ENCODE measurements at regions of chr7 and their contacts with region 1.

Region 1: GRCh38 chr7:151095123-151095797 is 9.0 kb downstream of the AGAP3 start:
- DNase-seq: no peak
- H3K4me3 ChIP-seq: no peak overlapping the region
- H3K4me3 Mint-ChIP-seq: no peak overlapping the region
- H3K27ac Mint-ChIP-seq: no peak overlapping the region
- H3K4me1 ChIP-seq: 0 out of 2 replicates have a peak, but pooled peaks cover 3% of the 10 kb centered on the region
- H3K4me1 Mint-ChIP-seq: peaks cover 7% of the 10 kb centered on the region
- H3K27me3 ChIP-seq: no peaks in the 10 kb centered on the region
- H3K27me3 Mint-ChIP-seq: no peaks in the 10 kb centered on the region
- CTCF ChIP-seq: no peak

Region 2: GRCh38 chr7:151017953-151018420 is 77.3 kb before region 1 on chr7:
- CTCF ChIA-PET with region 1: no interaction called
- POLR2A ChIA-PET with region 1: no interaction called
- intact Hi-C with region 1: no loop called
- DNase-seq: peak; percentile 74 to 89
- H3K4me3 ChIP-seq: peak overlapping the region; percentile 33
- H3K4me3 Mint-ChIP-seq: peak overlapping the region; percentile 77
- H3K27ac Mint-ChIP-seq: peak overlapping the region; percentile 80
- H3K4me1 ChIP-seq: peaks cover 26% of the 10 kb centered on the region
- H3K4me1 Mint-ChIP-seq: peaks cover 12% of the 10 kb centered on the region
- H3K27me3 ChIP-seq: no peaks in the 10 kb centered on the region
- H3K27me3 Mint-ChIP-seq: peaks cover 6% of the 10 kb centered on the region
- CTCF ChIP-seq: peak; percentile 91 to 98

Region 3: GRCh38 chr7:151057989-151058780 is 37.1 kb before region 1 on chr7:
- CTCF ChIA-PET with region 1: no interaction called
- POLR2A ChIA-PET with region 1: interaction called, 14 read pairs
- intact Hi-C with region 1: no loop called
- DNase-seq: peak; percentile 98 to 99
- H3K4me3 ChIP-seq: peak overlapping the region; percentile 59
- H3K4me3 Mint-ChIP-seq: peak overlapping the region; percentile 95
- H3K27ac Mint-ChIP-seq: peak overlapping the region; percentile 94
- H3K4me1 ChIP-seq: peaks cover 23% of the 10 kb centered on the region
- H3K4me1 Mint-ChIP-seq: peaks cover 25% of the 10 kb centered on the region
- H3K27me3 ChIP-seq: no peaks in the 10 kb centered on the region
- H3K27me3 Mint-ChIP-seq: no peaks in the 10 kb centered on the region
- CTCF ChIP-seq: no peak

Measured in Caco-2 (cell line).